Activated B cell treated with CpG ODN at 0.5 μM for 24 hours (primary cell): ENCODE measurements at regions of chr22 and their contacts with region 1.

Region 1: DNA sequence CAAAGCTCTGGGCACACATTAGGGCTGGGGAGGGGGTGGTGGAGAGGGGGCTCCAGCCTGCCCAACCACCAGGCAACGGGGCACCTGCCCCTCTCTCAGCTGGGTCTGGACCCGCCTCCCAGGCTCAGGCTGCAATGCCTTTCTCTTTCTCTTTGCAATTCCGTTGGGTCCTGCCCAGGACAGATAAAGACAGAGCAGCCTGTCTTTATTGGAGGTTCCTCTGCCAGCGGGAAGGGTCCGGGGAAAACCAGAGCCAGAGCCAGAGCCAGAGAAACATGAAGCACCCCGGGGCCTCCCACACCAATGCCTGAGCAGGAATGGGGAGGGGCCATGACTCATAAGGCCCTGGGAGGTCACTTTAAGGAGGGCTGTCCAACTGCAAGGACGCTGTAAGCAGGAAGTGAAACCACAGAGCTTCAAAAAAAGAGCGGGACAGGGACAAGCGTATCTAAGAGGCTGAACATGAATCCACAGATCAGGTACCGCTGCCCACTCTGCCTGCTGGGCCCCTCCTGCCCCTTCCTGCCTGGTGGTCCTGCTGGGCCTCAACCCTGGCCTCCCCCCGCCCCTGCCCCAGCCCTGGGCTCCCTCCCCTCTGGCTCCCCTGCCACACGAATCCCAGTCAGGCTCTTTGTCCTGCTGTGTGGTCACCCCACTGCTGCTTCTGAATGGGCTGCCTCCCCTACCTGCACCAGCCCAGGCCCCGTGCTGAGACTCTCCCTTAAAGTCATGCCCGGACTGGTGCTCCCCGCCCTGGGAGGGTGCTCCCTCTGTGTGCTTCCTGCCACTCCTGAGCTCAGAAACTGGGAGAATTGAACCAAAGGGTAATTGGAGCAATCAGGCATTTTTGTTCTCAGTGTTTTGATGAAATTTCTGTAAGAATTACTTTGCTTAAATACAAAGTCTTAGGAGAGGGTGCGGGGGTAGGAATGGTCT is at the start of gene APOBEC3B:
- DNase-seq: peak; percentile 65
- ATAC-seq: peak; percentile 82
- H3K4me3 Mint-ChIP-seq: peak within 1 kb of the TSS; percentile 88
- H3K27ac Mint-ChIP-seq: peak within 1 kb of the TSS; percentile 82
- H3K4me1 Mint-ChIP-seq: peaks cover 52% of the 10 kb centered on the region
- H3K27me3 Mint-ChIP-seq: no peaks in the 10 kb centered on the region
- CTCF ChIP-seq: no peak
- total RNA-seq, gene APOBEC3B: 8.0 TPM in 2 replicates

Region 2: DNA sequence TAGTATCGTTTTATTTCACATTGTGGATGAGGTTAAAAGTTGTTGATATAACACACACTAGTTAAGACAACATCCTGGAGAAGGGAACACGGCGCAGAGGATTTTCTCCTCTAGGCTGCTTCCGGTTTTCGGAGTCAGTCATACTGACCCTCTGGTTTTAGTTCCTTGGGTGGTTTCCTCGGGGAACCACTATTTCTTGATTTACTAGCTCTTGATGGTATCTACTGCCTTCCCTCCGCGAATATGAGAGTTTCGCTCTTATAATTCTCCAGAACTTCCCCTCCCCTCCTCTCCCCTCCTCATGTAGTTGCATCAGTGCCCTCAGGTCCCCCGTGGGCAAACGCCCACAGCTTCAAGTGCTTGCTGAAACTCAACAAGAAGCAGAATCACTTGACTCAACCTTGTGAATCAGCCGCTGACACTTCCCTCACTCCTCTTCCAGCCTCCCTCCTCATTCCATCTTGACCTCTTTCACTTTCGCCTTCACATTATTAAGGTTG is 40.7 kb before region 1 on chr22:
- CTCF ChIA-PET with region 1: no interaction called
- POLR2A ChIA-PET with region 1: interaction called, 19 read pairs
- intact Hi-C with region 1: loop called (anchors 1 kb)
- DNase-seq: peak; percentile 35
- ATAC-seq: peak; percentile 92
- H3K4me3 Mint-ChIP-seq: peak overlapping the region; percentile 62
- H3K27ac Mint-ChIP-seq: peak overlapping the region; percentile 82
- H3K4me1 Mint-ChIP-seq: peaks cover 45% of the 10 kb centered on the region
- H3K27me3 Mint-ChIP-seq: peaks cover 13% of the 10 kb centered on the region
- CTCF ChIP-seq: no peak

Region 3: GRCh38 chr22:38950527-38951295 is 31.5 kb before region 1 on chr22:
- CTCF ChIA-PET with region 1: no interaction called
- POLR2A ChIA-PET with region 1: interaction called, 18 read pairs
- intact Hi-C with region 1: no loop called
- DNase-seq: no peak
- ATAC-seq: no peak
- H3K4me3 Mint-ChIP-seq: no peak overlapping the region
- H3K27ac Mint-ChIP-seq: no peak overlapping the region
- H3K4me1 Mint-ChIP-seq: peaks cover 22% of the 10 kb centered on the region
- H3K27me3 Mint-ChIP-seq: peaks cover 21% of the 10 kb centered on the region
- CTCF ChIP-seq: no peak

Region 4: DNA sequence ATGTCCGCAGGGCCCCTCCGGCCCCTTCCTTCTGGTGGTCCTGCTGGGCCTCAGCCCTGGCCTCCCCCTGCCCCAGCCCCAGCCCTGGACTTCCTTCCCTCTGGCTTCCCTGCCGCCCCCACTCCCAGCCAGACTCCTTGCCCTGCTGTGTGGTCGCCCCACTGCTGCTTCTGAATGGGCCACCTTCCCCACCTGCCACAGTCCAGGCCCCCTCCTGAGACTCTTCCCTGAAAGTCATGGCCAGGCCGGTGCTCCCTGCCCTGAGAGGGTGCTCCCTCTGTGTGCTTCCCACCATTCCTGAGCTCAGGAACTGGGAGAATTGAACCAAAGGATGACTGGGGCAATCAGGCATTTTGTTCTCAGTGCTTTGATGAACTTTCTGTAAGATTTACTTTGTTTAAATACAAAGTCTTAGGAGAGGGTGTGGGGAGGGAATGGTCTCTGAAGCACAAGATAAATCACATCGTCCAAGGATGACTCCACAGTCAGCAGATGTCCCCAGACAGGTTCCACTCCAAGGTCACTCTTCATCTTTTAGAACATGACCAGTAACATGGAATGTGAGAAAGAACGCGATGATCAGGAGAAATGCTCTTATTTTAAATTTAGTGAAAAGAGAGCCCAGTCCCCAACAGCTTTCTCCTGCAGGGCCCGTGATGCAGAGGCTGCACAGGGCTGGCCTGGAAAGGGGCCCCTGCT is 39.4 kb after region 1 on chr22:
- CTCF ChIA-PET with region 1: no interaction called
- POLR2A ChIA-PET with region 1: interaction called, 16 read pairs
- intact Hi-C with region 1: no loop called
- DNase-seq: no peak
- ATAC-seq: no peak
- H3K4me3 Mint-ChIP-seq: peak overlapping the region; percentile 91
- H3K27ac Mint-ChIP-seq: peak overlapping the region; percentile 96
- H3K4me1 Mint-ChIP-seq: peaks cover 54% of the 10 kb centered on the region
- H3K27me3 Mint-ChIP-seq: no peaks in the 10 kb centered on the region
- CTCF ChIP-seq: no peak

Region 5: DNA sequence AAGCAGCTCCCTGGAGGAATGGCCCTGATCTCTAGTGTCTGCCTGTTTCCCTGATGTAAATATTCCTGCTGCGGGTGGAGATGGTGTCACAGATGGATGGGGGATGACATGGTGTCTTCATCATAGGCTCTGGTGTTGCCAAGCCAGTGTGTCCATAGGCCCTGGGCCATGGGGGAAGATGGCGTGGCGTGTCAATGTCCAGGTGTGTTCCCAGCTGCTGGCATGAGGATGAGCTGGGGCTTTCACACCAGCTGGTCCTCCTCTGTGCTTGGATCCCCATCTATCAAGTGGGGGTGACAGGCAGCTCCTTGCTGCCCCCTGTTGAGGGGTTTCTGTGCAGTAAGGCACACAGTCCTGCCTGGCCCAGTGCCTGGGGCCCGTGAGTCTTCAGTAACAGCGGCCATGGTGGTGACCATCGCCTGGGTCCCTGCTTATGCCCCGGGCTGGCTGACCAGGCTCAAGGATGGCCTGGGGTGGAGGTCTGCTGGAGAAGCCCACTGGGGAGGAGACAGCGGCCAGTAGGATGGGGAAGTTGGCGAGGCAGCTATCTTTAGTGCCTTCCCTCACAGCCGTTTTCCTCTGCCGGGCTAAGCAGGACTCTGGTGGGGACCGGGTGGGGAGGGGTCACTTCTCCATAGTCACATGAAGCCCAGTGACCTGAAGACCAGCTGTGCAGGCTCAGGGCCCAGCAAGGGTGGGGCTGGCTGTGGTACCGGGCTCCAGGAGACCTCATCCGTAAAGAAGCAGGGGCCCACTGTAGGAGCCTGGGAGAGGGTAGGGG is 324.5 kb after region 1 on chr22:
- CTCF ChIA-PET with region 1: no interaction called
- POLR2A ChIA-PET with region 1: no interaction called
- intact Hi-C with region 1: no loop called
- DNase-seq: no peak
- ATAC-seq: peak; percentile 29
- H3K4me3 Mint-ChIP-seq: no peak overlapping the region
- H3K27ac Mint-ChIP-seq: no peak overlapping the region
- H3K4me1 Mint-ChIP-seq: peaks cover 17% of the 10 kb centered on the region
- H3K27me3 Mint-ChIP-seq: no peaks in the 10 kb centered on the region
- CTCF ChIP-seq: no peak